Sciatic nerve (tissue), 2 donors: ENCODE measurements at regions of chr17 and their contacts with region 1.

Region 1: GRCh38 chr17:77405867-77406732 is 265.3 kb downstream of the SEC14L1 start:
- DNase-seq: no peak
- ATAC-seq: no peak

Region 2: GRCh38 chr17:77375917-77376651 is 30.0 kb before region 1 on chr17:
- intact Hi-C with region 1: loop called (anchors 2 kb)
- DNase-seq: no peak
- ATAC-seq: no peak